Left ventricle myocardium superior (tissue), 1 donor: ENCODE measurements at regions of chr7 and their contacts with region 1.

Region 1: DNA sequence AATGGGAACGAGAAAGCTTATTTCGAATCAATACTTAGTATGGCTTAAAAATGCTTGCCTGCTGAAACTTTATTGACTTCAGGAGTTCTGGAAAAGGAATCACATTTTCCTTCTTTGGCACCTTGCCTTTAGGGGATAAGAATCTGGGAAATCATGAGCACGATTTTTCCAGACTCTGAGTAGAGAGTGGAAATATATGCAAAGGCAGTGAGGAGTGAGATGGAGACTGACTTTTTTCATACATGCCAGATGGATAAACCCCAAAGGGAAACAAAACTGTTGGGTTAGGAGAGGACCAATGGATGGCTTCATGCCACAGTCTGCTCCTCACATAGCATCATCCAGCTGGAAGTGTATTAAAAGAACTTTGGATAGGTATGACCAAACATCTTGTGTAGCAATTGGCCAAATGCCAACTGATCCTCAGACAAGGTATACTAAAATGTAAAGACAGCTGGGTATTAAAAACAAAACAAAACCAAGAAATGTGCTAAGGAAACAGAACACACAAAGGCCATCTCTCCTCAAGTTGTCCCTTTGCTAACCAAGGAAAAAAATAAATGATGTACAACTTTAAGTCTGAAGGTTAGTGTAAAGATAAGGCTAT is 1.7 kb downstream of the COL28A1 start:
- DNase-seq: no peak
- ATAC-seq: no peak

Region 2: DNA sequence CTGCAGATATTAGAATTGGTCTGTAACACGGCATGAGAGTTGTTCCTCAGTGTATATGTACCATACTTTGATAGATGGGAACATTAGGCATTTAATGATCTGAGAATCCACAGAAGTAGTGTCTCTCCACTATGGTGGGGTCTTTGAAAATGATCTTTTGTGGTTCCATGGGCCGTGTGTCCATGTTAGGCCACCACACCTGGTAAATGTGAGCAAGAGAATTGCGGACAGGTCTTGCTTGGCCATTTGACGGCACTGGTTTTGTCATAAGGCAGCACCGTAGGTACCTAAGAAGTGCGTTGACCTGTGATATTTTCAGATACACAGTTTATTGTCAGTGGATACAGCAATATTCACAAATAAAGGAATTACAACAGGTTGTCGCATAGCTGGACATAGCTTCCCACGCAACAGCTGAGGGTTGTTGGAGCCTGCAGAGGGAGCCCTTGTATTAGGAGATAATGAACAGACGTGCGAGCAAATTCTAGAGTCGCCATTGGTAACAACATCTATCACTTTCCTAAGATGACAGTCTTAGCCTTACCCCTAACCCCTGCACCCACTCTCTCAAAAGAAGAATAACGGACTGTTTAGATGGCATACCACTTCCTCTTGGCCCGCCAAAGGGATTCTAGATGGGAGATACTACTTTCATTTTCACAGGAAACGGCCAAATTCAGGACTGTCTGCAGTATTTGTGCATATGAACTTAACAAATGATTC is 109.6 kb before region 1 on chr7:
- intact Hi-C with region 1: loop called (anchors 5 kb)
- DNase-seq: peak; percentile 46
- ATAC-seq: peak; percentile 89